ENCODE measurements at regions of chr16 and their contacts with region 1.

Region 1: GRCh38 chr16:55711959-55712876 is 56.4 kb downstream of the SLC6A2 start:
- DNase-seq: peak; percentile 53
- H3K4me3 ChIP-seq: no peak overlapping the region
- H3K27ac ChIP-seq: no peak overlapping the region
- H3K27me3 ChIP-seq: no peaks in the 10 kb centered on the region
- CTCF ChIP-seq: peak; percentile 78

Region 2: GRCh38 chr16:55465077-55465896 is 246.9 kb before region 1 on chr16:
- in situ Hi-C with region 1: loop called (anchors 25 kb)
- DNase-seq: peak; percentile 77
- H3K4me3 ChIP-seq: peak overlapping the region; percentile 9
- H3K27ac ChIP-seq: no peak overlapping the region
- H3K27me3 ChIP-seq: no peaks in the 10 kb centered on the region
- CTCF ChIP-seq: peak; percentile 99

Region 3: DNA sequence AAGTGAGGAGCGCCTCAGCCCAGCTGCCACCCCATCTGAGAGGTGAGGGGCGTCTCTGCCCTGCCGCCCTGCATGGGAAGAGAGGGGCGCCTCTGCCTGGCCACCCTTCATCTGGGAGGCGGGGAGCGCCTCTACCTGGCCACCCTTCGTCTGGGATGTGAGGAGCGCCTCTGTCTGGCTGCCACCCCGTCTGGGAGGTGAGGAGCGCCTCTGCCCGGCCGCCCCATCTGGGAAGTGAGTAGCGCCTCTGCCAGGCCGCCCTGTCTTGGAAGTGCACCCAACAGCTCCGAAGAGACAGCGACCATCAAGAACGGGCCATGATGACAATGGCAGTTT is 277.3 kb after region 1 on chr16:
- in situ Hi-C with region 1: no loop called
- DNase-seq: no peak
- H3K4me3 ChIP-seq: no peak overlapping the region
- H3K27ac ChIP-seq: no peak overlapping the region
- H3K27me3 ChIP-seq: no peaks in the 10 kb centered on the region
- CTCF ChIP-seq: no peak

Measured in brain microvascular endothelial cell (primary cell).